ENCODE measurements at regions of chr13 and their contacts with region 1.

Region 1: GRCh38 chr13:46184277-46184699 is 2.3 kb upstream of the LCP1 start:
- DNase-seq: peak; percentile 51 to 90 (median 66)
- ATAC-seq: peak; percentile 56
- H3K4me3 ChIP-seq: peak overlapping the region; percentile 21
- H3K4me3 Mint-ChIP-seq: peak overlapping the region; percentile 76
- H3K27ac ChIP-seq: peak overlapping the region; percentile 84 to 91
- H3K27ac Mint-ChIP-seq: peak overlapping the region; percentile 98
- H3K4me1 ChIP-seq: peaks cover 33% of the 10 kb centered on the region
- H3K4me1 Mint-ChIP-seq: peaks cover 47% of the 10 kb centered on the region
- H3K27me3 ChIP-seq: no peaks in the 10 kb centered on the region
- H3K27me3 Mint-ChIP-seq: no peaks in the 10 kb centered on the region
- CTCF ChIP-seq: peak; percentile 74

Region 2: DNA sequence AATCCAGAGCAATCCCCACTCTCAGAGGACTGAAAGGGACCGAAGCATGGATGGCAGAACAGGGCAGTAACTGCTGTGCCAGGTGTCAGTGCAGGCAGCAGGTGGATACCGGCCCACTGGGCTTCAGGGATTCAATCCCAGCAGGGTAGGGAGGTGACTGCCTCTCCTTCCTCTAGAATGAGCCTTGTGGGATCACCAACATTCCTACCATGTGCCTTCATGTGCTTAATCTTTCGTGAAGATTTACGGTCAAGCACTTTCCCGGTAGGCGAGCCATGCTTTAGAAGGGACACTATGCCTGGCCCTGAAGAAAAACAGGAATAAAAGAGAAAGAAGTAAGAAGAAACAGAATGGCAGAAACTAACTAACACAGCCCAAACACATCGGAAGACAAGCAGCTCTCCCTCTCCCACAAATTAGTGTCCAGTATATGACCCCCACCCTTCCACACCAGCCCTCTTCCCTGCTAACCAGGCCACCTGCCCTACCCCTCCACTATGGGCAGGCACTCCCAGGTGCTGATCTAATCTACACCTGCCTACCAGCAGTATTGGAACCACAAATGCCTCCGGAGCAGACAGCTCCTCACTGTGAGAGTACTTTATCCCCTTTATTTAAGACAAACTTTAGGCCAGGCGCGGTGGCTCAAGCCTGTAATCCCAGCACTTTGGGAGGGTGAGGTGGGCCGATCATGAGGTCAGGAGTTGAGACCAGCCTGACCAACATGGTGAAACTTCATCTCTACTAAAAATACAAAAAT is 1357.5 kb before region 1 on chr13:
- CTCF ChIA-PET with region 1: no interaction called
- POLR2A ChIA-PET with region 1: no interaction called
- intact Hi-C with region 1: no loop called
- DNase-seq: no peak
- ATAC-seq: no peak
- H3K4me3 ChIP-seq: no peak overlapping the region
- H3K4me3 Mint-ChIP-seq: no peak overlapping the region
- H3K27ac ChIP-seq: no peak overlapping the region
- H3K27ac Mint-ChIP-seq: no peak overlapping the region
- H3K4me1 ChIP-seq: no peaks in the 10 kb centered on the region
- H3K4me1 Mint-ChIP-seq: no peaks in the 10 kb centered on the region
- H3K27me3 ChIP-seq: peaks cover 2 to 3% of the 10 kb centered on the region in 2 experiments
- H3K27me3 Mint-ChIP-seq: no peaks in the 10 kb centered on the region
- CTCF ChIP-seq: no peak

Region 3: GRCh38 chr13:46052319-46053161 is 131.7 kb before region 1 on chr13 and contains the start of gene ZC3H13:
- CTCF ChIA-PET with region 1: interaction called, 3 read pairs
- POLR2A ChIA-PET with region 1: interaction called, 7 read pairs
- intact Hi-C with region 1: loop called in 1 of 2 experiments (anchors 5 kb)
- DNase-seq: peak; percentile 87 to 98 (median 89)
- ATAC-seq: peak; percentile 96
- H3K4me3 ChIP-seq: peak within 1 kb of the TSS; percentile 84
- H3K4me3 Mint-ChIP-seq: peak within 1 kb of the TSS; percentile 91
- H3K27ac ChIP-seq: peak within 1 kb of the TSS; percentile 97
- H3K27ac Mint-ChIP-seq: peak within 1 kb of the TSS; percentile 86
- H3K4me1 ChIP-seq: peaks cover 2% of the 10 kb centered on the region
- H3K4me1 Mint-ChIP-seq: peaks cover 53% of the 10 kb centered on the region
- H3K27me3 ChIP-seq: peaks cover 0 to 10% of the 10 kb centered on the region in 2 experiments
- H3K27me3 Mint-ChIP-seq: peaks cover 22% of the 10 kb centered on the region
- CTCF ChIP-seq: peak; percentile 48
- total RNA-seq, gene ZC3H13: 36.5 to 43.8 TPM

Region 4: DNA sequence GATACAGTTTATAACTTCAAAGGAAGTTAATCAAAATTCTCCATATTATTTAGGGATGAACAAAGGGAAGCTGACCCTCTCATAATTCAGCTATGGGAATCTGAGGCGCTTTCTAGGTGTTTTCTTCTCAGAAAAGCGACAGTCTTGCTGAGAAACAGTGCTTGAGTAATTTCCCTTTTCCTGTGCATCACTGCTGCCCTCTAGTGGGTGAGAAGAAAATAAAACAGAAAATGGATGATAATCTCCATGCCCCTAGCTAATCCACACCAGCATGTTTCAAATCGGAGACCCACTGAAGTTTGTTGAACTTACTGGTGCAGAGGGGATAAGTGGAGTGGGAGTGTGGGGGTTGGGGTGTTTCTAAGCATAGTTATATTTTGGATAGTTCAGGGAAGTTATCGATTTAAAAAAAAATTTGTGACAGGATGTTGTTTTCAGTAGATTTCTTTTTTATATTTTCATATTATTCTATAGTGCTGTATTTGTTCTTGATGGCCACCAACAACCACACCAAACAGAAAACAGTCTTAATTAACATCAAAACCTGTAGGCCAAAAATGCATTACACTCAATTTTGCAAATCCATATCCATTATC is 23.7 kb before region 1 on chr13:
- CTCF ChIA-PET with region 1: interaction called, 46 read pairs
- POLR2A ChIA-PET with region 1: interaction called, 217 read pairs
- intact Hi-C with region 1: loop called (anchors 1 kb)
- DNase-seq: peak in 7 of 14 experiments; percentile 19 to 91 (median 51)
- ATAC-seq: peak; percentile 83
- H3K4me3 ChIP-seq: no peak overlapping the region
- H3K4me3 Mint-ChIP-seq: peak overlapping the region; percentile 83
- H3K27ac ChIP-seq: peak overlapping the region; percentile 62 to 69
- H3K27ac Mint-ChIP-seq: peak overlapping the region; percentile 91
- H3K4me1 ChIP-seq: peaks cover 32% of the 10 kb centered on the region
- H3K4me1 Mint-ChIP-seq: peaks cover 57% of the 10 kb centered on the region
- H3K27me3 ChIP-seq: no peaks in the 10 kb centered on the region
- H3K27me3 Mint-ChIP-seq: no peaks in the 10 kb centered on the region
- CTCF ChIP-seq: peak; percentile 89

Region 5: DNA sequence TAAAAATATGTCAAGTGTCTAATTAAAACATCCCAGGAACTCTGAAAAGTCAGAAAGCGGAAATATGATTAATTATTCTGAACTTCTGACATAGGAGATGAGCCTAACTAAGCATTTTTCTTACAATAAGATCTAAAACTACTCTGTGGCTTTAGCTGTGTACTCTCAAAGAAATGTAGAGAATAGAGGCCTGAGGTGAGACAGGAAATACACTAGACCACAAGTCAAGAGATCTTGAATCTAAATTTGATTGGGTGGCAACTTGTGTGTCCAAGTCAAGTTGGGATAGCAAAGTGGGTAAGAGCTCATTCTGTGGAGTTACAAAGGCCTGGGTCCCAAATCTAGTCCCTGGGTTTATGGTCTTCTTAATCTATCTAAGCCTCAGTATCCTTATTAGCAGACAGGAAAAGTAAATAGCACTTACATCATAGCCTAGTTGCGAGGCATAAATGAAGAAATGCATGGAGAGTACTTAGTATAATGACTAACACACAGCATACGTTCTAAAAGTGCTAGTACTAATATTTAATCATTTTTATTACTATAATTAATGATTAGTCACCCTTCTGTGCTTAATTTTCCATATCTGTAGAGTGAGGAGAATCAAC is 18.0 kb after region 1 on chr13:
- CTCF ChIA-PET with region 1: interaction called, 3 read pairs
- POLR2A ChIA-PET with region 1: interaction called, 9 read pairs
- intact Hi-C with region 1: loop called in 1 of 2 experiments (anchors 2 kb)
- DNase-seq: peak in 3 of 14 experiments; percentile 37 to 75 (median 41)
- ATAC-seq: peak; percentile 84
- H3K4me3 ChIP-seq: no peak overlapping the region
- H3K4me3 Mint-ChIP-seq: peak overlapping the region; percentile 60
- H3K27ac ChIP-seq: peak overlapping the region in 1 of 2 donors; percentile 30
- H3K27ac Mint-ChIP-seq: peak overlapping the region; percentile 81
- H3K4me1 ChIP-seq: peaks cover 26% of the 10 kb centered on the region
- H3K4me1 Mint-ChIP-seq: peaks cover 45% of the 10 kb centered on the region
- H3K27me3 ChIP-seq: no peaks in the 10 kb centered on the region
- H3K27me3 Mint-ChIP-seq: no peaks in the 10 kb centered on the region
- CTCF ChIP-seq: no peak

Region 6: GRCh38 chr13:46295491-46296114 is 111.3 kb after region 1 on chr13:
- CTCF ChIA-PET with region 1: no interaction called
- POLR2A ChIA-PET with region 1: interaction called, 13 read pairs
- intact Hi-C with region 1: loop called (anchors 1 to 10 kb)
- DNase-seq: peak; percentile 45 to 92 (median 58)
- ATAC-seq: peak; percentile 84
- H3K4me3 ChIP-seq: peak overlapping the region; percentile 11
- H3K4me3 Mint-ChIP-seq: peak overlapping the region; percentile 38
- H3K27ac ChIP-seq: peak overlapping the region; percentile 85 to 89
- H3K27ac Mint-ChIP-seq: peak overlapping the region; percentile 94
- H3K4me1 ChIP-seq: peaks cover 41% of the 10 kb centered on the region
- H3K4me1 Mint-ChIP-seq: peaks cover 58% of the 10 kb centered on the region
- H3K27me3 ChIP-seq: no peaks in the 10 kb centered on the region
- H3K27me3 Mint-ChIP-seq: no peaks in the 10 kb centered on the region
- CTCF ChIP-seq: no peak

Region 7: GRCh38 chr13:48050550-48050949 is 1866.3 kb after region 1 on chr13:
- CTCF ChIA-PET with region 1: no interaction called
- POLR2A ChIA-PET with region 1: no interaction called
- intact Hi-C with region 1: no loop called
- DNase-seq: no peak
- ATAC-seq: no peak
- H3K4me3 ChIP-seq: no peak overlapping the region
- H3K4me3 Mint-ChIP-seq: no peak overlapping the region
- H3K27ac ChIP-seq: no peak overlapping the region
- H3K27ac Mint-ChIP-seq: no peak overlapping the region
- H3K4me1 ChIP-seq: no peaks in the 10 kb centered on the region
- H3K4me1 Mint-ChIP-seq: no peaks in the 10 kb centered on the region
- H3K27me3 ChIP-seq: no peaks in the 10 kb centered on the region
- H3K27me3 Mint-ChIP-seq: no peaks in the 10 kb centered on the region
- CTCF ChIP-seq: no peak

Measured in CD4-positive, alpha-beta T cell (primary cell).